HCT116 (cell line): ENCODE measurements at regions of chr1 and their contacts with region 1.

Region 1: GRCh38 chr1:109027841-109028240 is 14.1 kb downstream of the WDR47 start:
- DNase-seq: no peak
- ATAC-seq: no peak
- H3K4me3 ChIP-seq: no peak overlapping the region
- H3K27ac ChIP-seq: no peak overlapping the region
- H3K4me1 ChIP-seq: no peaks in the 10 kb centered on the region
- H3K27me3 ChIP-seq: no peaks in the 10 kb centered on the region
- CTCF ChIP-seq: peak in 2 of 3 experiments; percentile 12 to 41; a peak in 3 of 6 replicates
- POLR2A ChIP-seq: no peak
- RAD21 ChIP-seq: no peak

Region 2: GRCh38 chr1:109017134-109017533 is 10.7 kb before region 1 on chr1:
- CTCF ChIA-PET with region 1: interaction called, 15 read pairs
- POLR2A ChIA-PET with region 1: no interaction called
- RAD21 ChIA-PET with region 1: interaction called in 1 of 2 experiments, 4 read pairs
- intact Hi-C with region 1: no loop called
- DNase-seq: no peak
- ATAC-seq: no peak
- H3K4me3 ChIP-seq: no peak overlapping the region
- H3K27ac ChIP-seq: no peak overlapping the region
- H3K4me1 ChIP-seq: no peaks in the 10 kb centered on the region
- H3K27me3 ChIP-seq: no peaks in the 10 kb centered on the region
- CTCF ChIP-seq: no peak
- POLR2A ChIP-seq: no peak
- RAD21 ChIP-seq: no peak